Right ventricle myocardium inferior (tissue), 1 donor: ENCODE measurements at regions of chr3 and their contacts with region 1.

Region 1: DNA sequence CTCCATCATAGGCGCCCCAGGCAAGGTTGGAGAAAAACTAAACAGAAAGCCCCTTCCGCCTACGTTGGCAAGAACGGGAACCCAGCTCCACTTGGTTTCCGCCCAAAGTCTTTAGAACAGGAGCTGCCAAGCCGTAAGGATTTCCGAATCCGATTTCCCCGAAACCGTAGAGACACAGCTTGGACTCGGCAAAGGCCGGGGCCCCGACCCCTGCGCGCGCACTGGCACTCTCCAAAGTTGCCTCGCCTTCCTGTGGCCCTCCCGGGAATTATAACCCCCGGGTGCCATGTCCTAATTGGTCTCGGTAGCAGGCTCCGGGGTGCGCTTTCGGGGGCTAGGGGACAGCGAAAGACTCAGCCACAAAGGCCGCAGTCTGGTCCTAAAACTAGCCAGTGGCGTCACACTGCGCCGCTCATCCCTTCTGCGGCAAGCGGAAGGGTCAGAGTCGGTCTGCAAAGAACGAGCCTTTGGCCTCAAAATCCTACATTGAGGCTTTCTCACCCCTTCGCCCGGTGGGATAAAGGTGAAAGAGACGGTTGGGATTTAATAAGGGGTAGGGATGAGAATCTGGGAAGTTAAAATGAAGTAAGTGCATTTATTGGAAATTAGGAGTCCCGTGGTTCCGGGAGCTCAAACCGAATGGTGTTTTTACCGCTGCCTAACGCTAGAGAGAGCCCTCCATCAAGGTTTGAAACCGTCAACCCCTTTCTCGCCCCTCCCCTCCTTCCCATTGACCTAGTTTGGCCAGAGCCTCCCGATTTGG is 6.8 kb downstream of the BCL6 start:
- DNase-seq: peak; percentile 82
- ATAC-seq: peak; percentile 71

Region 2: DNA sequence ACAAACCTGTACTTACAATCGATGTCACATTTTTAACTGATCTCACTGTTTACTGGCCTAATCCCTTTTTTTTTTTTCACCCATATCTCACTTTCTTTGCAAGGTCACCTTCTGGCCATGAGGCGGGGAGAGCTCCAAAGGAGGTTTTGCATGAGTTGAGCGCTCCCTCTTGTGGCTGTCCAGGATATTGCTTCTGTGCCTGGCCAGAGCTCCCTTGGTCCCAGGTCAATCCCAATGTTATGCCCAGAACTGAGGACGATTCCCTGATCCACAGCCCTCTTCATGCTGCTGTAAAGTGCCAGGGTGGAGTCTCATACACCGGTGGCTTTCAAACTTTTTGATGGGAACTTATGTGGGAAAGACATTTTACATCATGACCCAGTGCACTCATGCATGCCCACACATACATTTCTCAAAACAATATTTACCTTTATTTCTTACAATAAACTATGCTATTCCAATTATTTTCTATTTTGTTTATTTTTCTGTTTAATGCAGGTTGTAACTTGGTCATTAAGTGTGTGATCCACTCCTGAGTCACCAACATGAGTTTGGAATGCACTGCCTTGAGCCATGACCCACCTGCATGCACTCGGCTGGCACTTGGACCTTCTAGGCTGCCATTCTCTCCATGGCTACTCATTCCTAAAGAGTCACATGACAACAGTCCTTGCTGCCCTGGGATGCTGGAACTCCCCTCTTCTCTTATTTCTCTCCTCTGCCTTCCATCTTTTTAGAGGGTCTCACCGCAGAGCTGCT is 58.7 kb before region 1 on chr3:
- intact Hi-C with region 1: no loop called
- DNase-seq: peak; percentile 78
- ATAC-seq: peak; percentile 92

Region 3: GRCh38 chr3:188037216-188037718 is 298.8 kb after region 1 on chr3:
- intact Hi-C with region 1: loop called (anchors 2 kb)
- DNase-seq: no peak
- ATAC-seq: peak; percentile 81

Region 4: GRCh38 chr3:188197388-188197847 is 458.9 kb after region 1 on chr3:
- intact Hi-C with region 1: loop called (anchors 5 kb)
- DNase-seq: no peak
- ATAC-seq: peak; percentile 88

Region 5: DNA sequence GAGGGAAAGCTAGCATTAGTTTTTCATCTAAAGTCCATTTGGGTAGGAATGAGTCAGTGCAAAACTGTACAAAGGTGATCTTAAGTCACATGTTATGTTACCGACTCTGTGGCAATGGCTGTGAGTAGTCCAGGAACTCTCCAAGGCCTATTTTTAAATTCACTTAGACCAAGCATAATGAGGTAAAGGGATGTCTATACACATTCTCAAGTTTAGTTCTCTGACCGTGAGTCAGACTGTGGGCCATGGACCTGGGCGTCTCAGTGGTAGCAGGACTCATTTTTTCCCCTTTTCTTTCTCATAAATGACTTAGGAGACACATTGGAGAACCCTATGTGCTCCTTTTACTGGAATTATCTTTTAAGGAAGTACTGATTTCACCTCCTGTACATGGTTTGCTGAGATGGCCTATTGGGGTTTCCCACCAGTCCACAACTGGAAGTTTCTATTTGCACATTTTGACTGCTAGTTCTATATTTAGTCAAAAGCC is 944.6 kb after region 1 on chr3:
- intact Hi-C with region 1: loop called (anchors 5 kb)
- DNase-seq: no peak
- ATAC-seq: peak; percentile 67

Region 6: GRCh38 chr3:188947401-188948280 is 1209.1 kb after region 1 on chr3:
- intact Hi-C with region 1: loop called (anchors 2 kb)
- DNase-seq: peak; percentile 92
- ATAC-seq: peak; percentile 89

Region 7: GRCh38 chr3:189233225-189233858 is 1494.8 kb after region 1 on chr3:
- intact Hi-C with region 1: loop called (anchors 2 kb)
- DNase-seq: no peak
- ATAC-seq: peak; percentile 83